Dorsolateral prefrontal cortex (tissue), 120 donors: ENCODE measurements at regions of chr9 and their contacts with region 1.

Region 1: DNA sequence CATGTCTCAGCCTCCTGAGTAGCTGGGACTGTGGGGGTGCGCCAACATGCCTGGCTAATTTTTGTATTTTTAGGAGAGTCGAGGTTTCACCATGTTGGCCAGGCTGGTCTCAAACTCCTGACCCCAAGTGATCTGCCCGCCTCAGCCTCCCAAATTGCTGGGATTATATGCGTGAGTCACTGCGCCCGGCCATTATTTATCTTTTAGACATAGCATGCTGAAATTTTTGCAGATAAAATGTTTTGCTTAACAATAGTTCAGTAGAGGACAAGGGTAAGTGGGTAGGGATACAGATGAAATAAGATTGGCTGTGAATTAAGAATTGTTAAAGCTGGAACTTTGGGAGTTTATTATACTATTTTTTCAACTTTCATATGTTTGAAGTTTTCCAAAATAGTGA is 150.8 kb upstream of the GRHPR start:
- DNase-seq: no peak
- H3K4me3 ChIP-seq: no peak overlapping the region
- H3K27ac ChIP-seq: no peak overlapping the region
- H3K27me3 ChIP-seq: no peaks in the 10 kb centered on the region
- CTCF ChIP-seq: no peak

Region 2: GRCh38 chr9:36808251-36808650 is 463.4 kb before region 1 on chr9:
- intact Hi-C with region 1: loop called in 1 of 2 experiments (anchors 5 kb)
- DNase-seq: no peak
- H3K4me3 ChIP-seq: no peak overlapping the region
- H3K27ac ChIP-seq: no peak overlapping the region
- H3K27me3 ChIP-seq: peaks cover 0 to 6% (median 0%) of the 10 kb centered on the region in 45 donors
- CTCF ChIP-seq: no peak

Region 3: GRCh38 chr9:37350486-37351190 is 79.0 kb after region 1 on chr9:
- intact Hi-C with region 1: no loop called
- DNase-seq: no peak
- H3K4me3 ChIP-seq: no peak overlapping the region
- H3K27ac ChIP-seq: no peak overlapping the region
- H3K27me3 ChIP-seq: no peaks in the 10 kb centered on the region
- CTCF ChIP-seq: no peak